CD8-positive, alpha-beta T cell (primary cell): ENCODE measurements at regions of chr19 and their contacts with region 1.

Region 1: DNA sequence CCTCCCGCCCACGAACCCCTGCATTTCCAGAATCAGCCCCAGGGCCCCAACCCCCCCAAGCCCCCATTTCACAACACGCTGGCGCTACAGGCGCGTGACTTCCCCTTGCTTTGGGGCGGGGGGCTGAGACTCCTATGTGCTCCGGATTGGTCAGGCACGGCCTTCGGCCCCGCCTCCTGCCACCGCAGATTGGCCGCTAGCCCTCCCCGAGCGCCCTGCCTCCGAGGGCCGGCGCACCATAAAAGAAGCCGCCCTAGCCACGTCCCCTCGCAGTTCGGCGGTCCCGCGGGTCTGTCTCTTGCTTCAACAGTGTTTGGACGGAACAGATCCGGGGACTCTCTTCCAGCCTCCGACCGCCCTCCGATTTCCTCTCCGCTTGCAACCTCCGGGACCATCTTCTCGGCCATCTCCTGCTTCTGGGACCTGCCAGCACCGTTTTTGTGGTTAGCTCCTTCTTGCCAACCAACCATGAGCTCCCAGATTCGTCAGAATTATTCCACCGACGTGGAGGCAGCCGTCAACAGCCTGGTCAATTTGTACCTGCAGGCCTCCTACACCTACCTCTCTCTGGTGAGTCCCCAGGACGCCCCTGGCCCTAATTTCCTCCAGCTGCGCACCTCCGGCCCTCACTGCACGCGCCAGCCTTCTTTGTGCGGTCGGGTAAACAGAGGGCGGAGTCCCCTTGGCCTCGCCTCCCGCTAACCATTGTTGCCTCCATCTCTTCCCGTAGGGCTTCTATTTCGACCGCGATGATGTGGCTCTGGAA is at the start of gene FTL:
- DNase-seq: peak; percentile 71 to 96 (median 88)
- ATAC-seq: peak; percentile 73
- H3K4me3 ChIP-seq: peak within 1 kb of the TSS; percentile 83 to 98
- H3K4me3 Mint-ChIP-seq: peak within 1 kb of the TSS; percentile 99
- H3K27ac ChIP-seq: peak within 1 kb of the TSS; percentile 84 to 90
- H3K27ac Mint-ChIP-seq: peak within 1 kb of the TSS; percentile 99
- H3K4me1 ChIP-seq: peaks cover 49% of the 10 kb centered on the region
- H3K4me1 Mint-ChIP-seq: peaks cover 60% of the 10 kb centered on the region
- H3K27me3 ChIP-seq: no peaks in the 10 kb centered on the region
- H3K27me3 Mint-ChIP-seq: no peaks in the 10 kb centered on the region
- CTCF ChIP-seq: no peak
- total RNA-seq, gene FTL: 665 to 668 TPM

Region 2: GRCh38 chr19:48872182-48872883 is 92.9 kb before region 1 on chr19 and contains the start of gene PPP1R15A:
- CTCF ChIA-PET with region 1: interaction called, 9 read pairs
- POLR2A ChIA-PET with region 1: interaction called, 3 read pairs
- intact Hi-C with region 1: loop called (anchors 1 kb)
- DNase-seq: peak; percentile 95 to 99 (median 98)
- ATAC-seq: peak; percentile 41
- H3K4me3 ChIP-seq: peak within 1 kb of the TSS; percentile 88 to 90
- H3K4me3 Mint-ChIP-seq: peak within 1 kb of the TSS; percentile 97
- H3K27ac ChIP-seq: peak within 1 kb of the TSS; percentile 98 to 99
- H3K27ac Mint-ChIP-seq: peak within 1 kb of the TSS; percentile 100
- H3K4me1 ChIP-seq: peaks cover 32% of the 10 kb centered on the region
- H3K4me1 Mint-ChIP-seq: peaks cover 34% of the 10 kb centered on the region
- H3K27me3 ChIP-seq: no peaks in the 10 kb centered on the region
- H3K27me3 Mint-ChIP-seq: no peaks in the 10 kb centered on the region
- CTCF ChIP-seq: no peak
- total RNA-seq, gene PPP1R15A: 398 to 399 TPM

Region 3: DNA sequence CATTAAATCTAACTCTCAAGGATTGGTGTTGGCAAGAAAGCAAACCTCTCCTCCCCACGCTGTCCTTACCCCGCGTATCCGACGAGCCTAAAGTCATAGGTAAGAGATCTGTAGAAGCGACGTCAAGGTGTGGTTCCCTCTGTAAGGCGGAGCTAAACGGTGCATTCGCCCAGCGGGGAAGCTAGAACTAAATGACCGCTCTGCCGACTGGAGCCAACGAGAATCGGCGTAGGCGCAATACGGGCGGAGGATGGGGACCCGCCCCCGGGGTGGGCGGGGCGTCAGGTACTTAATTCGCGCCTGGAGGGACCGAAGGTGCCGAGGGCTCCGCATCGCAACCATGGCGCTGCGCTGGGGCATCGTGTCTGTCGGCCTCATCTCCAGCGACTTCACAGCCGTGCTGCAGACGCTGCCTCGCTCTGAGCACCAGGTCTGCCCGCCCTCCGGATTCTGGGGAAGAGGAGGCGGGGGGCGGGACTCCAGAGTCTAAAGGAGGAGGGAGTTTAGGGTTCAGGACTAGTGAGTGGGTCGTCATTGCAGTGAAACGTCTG is 31.8 kb before region 1 on chr19 and contains the start of gene DHDH:
- CTCF ChIA-PET with region 1: interaction called, 3 read pairs
- POLR2A ChIA-PET with region 1: interaction called, 16 read pairs
- intact Hi-C with region 1: loop called in 1 of 2 experiments (anchors 1 kb)
- DNase-seq: peak; percentile 75 to 92 (median 89)
- ATAC-seq: peak; percentile 98
- H3K4me3 ChIP-seq: peak within 1 kb of the TSS; percentile 36 to 48
- H3K4me3 Mint-ChIP-seq: peak within 1 kb of the TSS; percentile 85
- H3K27ac ChIP-seq: peak within 1 kb of the TSS in 1 of 2 experiments; percentile 26
- H3K27ac Mint-ChIP-seq: peak within 1 kb of the TSS; percentile 86
- H3K4me1 ChIP-seq: peaks cover 5% of the 10 kb centered on the region
- H3K4me1 Mint-ChIP-seq: peaks cover 16% of the 10 kb centered on the region
- H3K27me3 ChIP-seq: no peaks in the 10 kb centered on the region
- H3K27me3 Mint-ChIP-seq: no peaks in the 10 kb centered on the region
- CTCF ChIP-seq: no peak
- total RNA-seq, gene DHDH: 0.68 to 1.0 TPM

Region 4: GRCh38 chr19:48975947-48976847 is 11.0 kb after region 1 on chr19:
- CTCF ChIA-PET with region 1: interaction called, 24 read pairs
- POLR2A ChIA-PET with region 1: interaction called, 5 read pairs
- intact Hi-C with region 1: no loop called
- DNase-seq: peak in 4 of 9 experiments; percentile 32 to 64 (median 57)
- ATAC-seq: peak; percentile 86
- H3K4me3 ChIP-seq: no peak overlapping the region
- H3K4me3 Mint-ChIP-seq: no peak overlapping the region
- H3K27ac ChIP-seq: no peak overlapping the region
- H3K27ac Mint-ChIP-seq: no peak overlapping the region
- H3K4me1 ChIP-seq: no peaks in the 10 kb centered on the region
- H3K4me1 Mint-ChIP-seq: no peaks in the 10 kb centered on the region
- H3K27me3 ChIP-seq: no peaks in the 10 kb centered on the region
- H3K27me3 Mint-ChIP-seq: no peaks in the 10 kb centered on the region
- CTCF ChIP-seq: no peak

Region 5: DNA sequence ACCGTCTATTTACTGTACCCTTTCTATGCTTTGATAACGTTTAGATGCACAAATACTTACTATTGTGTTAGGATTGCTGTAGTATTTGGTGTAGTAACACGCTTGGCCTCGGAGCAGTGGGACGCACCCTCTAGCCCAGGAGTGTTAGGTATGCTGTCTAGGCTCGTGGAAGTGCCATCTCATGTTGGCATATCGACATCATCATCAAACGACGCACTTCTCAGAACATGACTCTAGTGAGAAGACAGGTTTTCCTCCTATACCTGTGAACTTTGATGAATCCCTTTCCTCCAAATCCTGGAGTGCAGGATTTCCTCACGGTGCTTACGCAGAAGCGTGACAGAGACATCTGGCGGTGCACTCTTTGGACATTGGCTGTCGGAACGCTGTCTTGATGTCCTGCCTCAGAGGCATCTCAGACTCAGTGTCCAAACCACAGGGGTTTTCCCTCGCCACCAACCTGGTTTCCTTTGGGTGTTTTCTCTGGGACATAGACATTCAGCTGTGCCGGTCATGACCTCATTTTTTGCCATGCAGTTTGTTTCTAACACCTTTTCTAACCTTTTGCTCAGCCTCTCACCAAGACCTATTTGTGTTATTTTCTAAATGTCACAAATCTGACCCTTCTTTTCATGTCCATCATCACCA is 126.3 kb after region 1 on chr19:
- CTCF ChIA-PET with region 1: no interaction called
- POLR2A ChIA-PET with region 1: no interaction called
- intact Hi-C with region 1: no loop called
- DNase-seq: no peak
- ATAC-seq: no peak
- H3K4me3 ChIP-seq: no peak overlapping the region
- H3K4me3 Mint-ChIP-seq: no peak overlapping the region
- H3K27ac ChIP-seq: no peak overlapping the region
- H3K27ac Mint-ChIP-seq: peak overlapping the region; percentile 29
- H3K4me1 ChIP-seq: peaks cover 26% of the 10 kb centered on the region
- H3K4me1 Mint-ChIP-seq: peaks cover 36% of the 10 kb centered on the region
- H3K27me3 ChIP-seq: no peaks in the 10 kb centered on the region
- H3K27me3 Mint-ChIP-seq: no peaks in the 10 kb centered on the region
- CTCF ChIP-seq: no peak